Left ventricle myocardium superior (tissue), 1 donor: ENCODE measurements at regions of chr5 and their contacts with region 1.

Region 1: GRCh38 chr5:123610665-123611405 is 98.9 kb downstream of the CSNK1G3 start:
- DNase-seq: no peak
- ATAC-seq: peak; percentile 56

Region 2: DNA sequence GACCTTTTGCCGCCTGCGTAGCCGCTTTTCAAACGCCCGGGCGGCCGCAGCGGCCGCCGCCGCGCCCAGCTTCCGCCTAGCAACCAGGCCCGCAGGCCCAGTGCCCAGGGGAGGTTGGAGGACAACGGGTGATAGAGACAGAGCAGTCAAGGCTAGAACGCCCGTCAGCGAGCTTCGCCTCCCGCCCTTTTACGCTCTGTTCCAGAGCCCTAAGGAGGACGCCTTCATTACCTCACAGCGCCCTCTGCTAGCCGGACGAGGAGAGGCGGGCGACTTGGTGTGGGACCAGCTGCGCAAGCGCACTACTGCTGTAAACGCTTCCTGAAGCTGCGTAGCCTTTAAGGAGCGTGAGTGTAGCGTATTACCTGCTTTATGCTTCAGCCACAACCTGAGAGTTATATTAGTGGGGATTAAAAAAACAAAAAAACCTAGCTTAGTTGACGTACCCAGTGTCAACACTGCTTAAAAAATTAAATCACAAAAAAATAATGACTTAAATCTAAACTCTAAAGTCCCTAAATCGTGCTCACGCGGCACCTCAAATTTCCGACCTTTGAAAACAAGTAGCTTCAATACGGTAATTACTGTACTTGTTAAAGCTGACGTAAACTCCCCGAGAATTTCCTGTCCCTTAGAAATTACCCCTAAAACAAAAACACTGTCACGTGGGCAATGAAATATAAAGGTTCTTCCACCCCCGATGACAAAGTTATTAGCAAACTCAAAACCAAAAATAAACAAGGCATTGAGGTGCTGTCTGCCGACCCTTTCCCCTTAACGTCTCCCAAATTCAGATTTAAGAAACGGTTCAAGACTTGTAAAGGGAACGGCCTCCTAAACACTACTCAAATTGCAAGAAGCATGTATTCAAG is 187.3 kb before region 1 on chr5 and contains the start of gene CEP120:
- intact Hi-C with region 1: loop called (anchors 2 kb)
- DNase-seq: peak; percentile 99
- ATAC-seq: peak; percentile 99
- total RNA-seq, gene CEP120: 10.6 TPM

Region 3: DNA sequence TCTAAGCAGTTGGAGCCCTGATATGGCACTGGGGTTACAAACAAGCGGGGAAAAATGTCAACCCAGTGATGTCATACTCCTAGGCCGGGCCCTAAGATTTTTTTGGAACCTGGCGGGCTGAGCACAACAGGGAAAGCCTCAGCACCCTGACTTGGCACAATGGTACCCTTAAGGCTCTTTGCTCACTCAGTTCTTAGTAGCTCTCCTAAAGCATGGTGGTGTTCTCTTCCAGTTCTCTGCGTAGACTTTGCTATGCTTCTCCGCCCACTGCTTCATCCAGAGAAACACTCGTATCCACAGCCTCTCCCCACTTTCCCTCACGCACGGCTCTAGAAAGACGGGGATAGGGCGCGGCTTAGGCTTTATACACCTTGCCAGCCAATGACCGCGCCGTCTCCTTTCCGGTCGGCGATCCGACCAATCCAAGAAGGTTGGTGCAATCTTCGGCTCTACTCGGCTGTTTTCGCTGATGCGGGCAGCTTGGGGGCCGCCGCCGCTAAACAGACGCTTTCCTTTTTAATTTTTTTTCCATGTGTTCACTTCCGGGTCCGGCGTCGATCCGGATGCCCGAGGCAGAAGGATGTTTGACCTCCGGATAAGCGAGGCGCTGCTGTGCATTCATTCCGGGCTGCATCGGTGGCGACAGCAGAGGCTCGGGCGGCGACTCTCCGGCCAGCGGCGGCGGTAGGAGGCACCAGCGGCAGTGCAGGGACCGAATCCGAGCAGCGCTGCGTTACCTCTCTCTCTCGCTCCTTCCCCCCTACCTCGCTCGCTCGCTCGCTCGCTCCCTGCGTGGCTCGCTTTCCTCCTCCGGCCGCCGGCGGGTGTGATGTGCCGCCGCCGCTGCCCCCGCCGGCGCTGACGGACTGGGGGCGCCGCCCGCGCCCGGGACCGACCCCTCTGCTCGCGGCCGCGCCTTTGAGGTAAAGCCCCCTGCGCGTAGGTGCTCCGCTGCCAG is 98.9 kb before region 1 on chr5 and contains the start of gene CSNK1G3:
- intact Hi-C with region 1: loop called (anchors 10 kb)
- DNase-seq: peak; percentile 96
- ATAC-seq: peak; percentile 99
- total RNA-seq, gene CSNK1G3: 21.2 TPM